AG04450 (cell line): ENCODE measurements at regions of chr22 and their contacts with region 1.

Region 1: GRCh38 chr22:41697126-41697775 is 2.1 kb upstream of the MEI1 start:
- DNase-seq: peak; percentile 72
- H3K4me3 ChIP-seq: 0 out of 2 replicates have a peak overlapping the region, but pooled peaks have one; percentile 10
- H3K27ac ChIP-seq: no peak overlapping the region
- H3K27me3 ChIP-seq: no peaks in the 10 kb centered on the region
- CTCF ChIP-seq: peak; percentile 98

Region 2: DNA sequence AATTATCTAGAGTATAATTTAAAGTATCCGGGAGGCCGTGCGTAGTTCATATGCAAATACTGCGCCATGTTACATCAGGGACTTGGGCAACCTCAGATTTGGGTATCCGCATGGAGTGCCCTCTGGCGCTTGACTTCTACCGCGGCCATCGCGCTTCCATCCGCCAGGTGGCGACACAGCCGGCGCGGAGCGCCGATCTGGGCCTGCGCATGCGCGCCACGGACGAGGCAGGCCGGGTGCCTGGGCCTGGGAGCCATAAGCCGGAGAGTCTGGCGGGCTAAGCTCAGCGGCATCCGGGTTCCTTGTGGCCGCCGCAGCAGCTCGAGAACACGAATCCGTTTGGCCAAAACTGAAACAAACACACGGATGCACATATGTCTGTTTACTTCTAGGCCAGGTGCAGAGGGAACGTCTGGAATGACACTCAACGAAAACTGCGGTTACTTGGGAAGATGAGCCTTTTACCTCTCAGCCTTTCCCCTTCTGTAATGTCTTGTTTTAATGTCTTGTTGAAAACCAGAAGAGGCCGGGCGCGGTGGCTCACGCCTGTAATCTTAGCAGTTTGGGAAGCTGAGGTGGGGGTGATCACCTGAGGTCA is 30.5 kb before region 1 on chr22:
- CTCF ChIA-PET with region 1: interaction called, 19 read pairs
- POLR2A ChIA-PET with region 1: interaction called, 5 read pairs
- DNase-seq: peak; percentile 59
- H3K4me3 ChIP-seq: peak overlapping the region; percentile 37; the same call in 1 of the 2 replicates
- H3K27ac ChIP-seq: peak overlapping the region; percentile 95
- H3K27me3 ChIP-seq: no peaks in the 10 kb centered on the region
- CTCF ChIP-seq: peak; percentile 98

Region 3: DNA sequence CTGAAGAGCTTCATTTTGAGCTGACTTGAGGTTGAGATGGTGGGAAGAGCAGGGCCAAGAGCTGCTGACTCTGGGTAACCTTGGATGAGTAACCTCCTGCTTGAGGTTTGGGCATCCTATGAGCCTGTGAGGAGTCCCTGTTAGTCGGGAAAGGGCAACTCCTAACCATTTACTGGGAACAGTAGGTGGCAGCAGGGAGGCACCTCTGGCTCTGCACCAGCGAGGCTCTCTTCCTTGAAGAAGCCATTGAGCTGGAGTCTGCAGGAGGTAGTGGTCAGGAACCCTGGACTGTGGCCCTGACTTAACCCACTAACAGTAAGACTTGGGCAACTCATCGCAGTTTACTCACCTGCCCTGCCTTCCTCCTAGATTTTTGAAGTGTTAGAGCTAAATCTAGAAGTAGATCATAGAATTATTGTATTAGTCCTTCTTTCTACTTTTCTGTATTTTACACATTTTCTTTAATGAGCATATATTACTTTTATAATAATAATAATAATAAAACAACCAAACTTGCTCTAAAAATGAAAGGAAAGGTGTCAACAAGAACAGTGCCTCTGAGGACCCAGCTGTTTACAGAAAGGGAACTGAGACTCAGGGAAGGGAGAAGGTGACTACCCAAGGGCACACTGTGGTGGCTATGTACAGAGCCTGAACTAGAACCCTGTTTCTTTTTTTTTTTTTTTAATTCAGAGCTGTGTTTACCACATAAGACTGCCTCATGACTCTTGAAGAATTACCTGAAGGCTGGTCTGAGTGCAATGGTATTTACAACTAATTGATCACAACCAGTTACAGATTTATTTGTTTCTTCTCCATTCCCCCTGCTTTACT is 49.5 kb after region 1 on chr22:
- CTCF ChIA-PET with region 1: interaction called, 34 read pairs
- POLR2A ChIA-PET with region 1: no interaction called
- DNase-seq: peak; percentile 44
- H3K4me3 ChIP-seq: no peak overlapping the region
- H3K27ac ChIP-seq: no peak overlapping the region
- H3K27me3 ChIP-seq: peaks cover 27% of the 10 kb centered on the region
- CTCF ChIP-seq: peak; percentile 88

Region 4: DNA sequence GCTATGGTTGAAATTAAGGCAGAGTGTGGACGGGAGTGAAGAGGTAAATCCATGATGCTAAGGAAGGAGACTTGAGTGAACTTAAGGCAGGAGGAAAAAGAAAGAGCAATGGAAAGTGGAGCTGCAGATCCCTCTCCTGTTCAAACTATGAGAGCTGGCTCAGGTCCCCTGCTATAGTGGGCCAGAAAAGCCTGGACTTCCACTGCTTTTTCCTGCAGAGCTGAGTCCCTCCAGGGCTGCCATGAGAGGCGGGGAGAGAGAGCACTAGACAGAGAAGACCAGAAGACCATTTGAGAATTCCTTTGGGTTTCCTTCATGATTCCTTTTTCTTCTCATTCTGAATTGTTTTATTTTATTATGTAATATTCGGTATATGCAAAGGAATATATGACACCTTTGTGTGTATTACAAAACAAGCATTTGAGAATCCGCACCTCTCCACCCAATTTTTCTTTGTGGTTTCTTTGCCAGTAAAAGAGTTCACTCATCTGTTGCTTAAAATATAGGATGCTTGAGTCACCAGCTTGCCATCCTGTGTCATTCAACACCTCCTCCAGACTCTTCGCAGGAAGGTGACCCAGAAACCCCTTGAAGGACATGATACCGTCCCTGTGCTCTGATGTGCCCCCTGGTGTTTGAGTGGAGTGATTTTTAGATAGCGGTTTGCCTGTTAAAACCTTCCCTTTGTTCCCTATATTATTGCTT is 160.1 kb after region 1 on chr22:
- CTCF ChIA-PET with region 1: interaction called, 41 read pairs
- POLR2A ChIA-PET with region 1: no interaction called
- DNase-seq: no peak
- H3K4me3 ChIP-seq: no peak overlapping the region
- H3K27ac ChIP-seq: no peak overlapping the region
- H3K27me3 ChIP-seq: no peaks in the 10 kb centered on the region
- CTCF ChIP-seq: peak; percentile 73

Region 5: DNA sequence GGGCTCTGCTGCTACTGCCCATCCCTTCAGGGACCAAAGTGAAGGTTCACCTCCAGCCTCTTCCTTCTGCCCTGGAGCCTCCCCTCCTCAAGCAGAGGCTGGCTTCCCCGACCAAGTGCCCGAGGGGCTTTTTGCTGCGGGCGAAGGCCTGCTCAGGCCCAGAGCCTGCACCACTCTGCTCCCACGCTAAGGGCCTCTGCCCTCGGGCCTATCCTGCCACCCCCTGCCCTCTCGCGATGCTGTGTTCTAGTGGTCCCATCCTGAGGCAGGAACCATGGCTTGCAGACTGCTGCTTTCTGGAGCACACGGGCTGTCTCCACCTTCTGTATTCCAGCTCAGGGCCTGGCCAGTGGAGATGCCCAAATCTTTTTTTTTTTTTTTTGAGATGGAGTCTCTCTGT is 238.3 kb after region 1 on chr22:
- CTCF ChIA-PET with region 1: interaction called, 281 read pairs
- POLR2A ChIA-PET with region 1: interaction called, 6 read pairs
- DNase-seq: no peak
- H3K4me3 ChIP-seq: no peak overlapping the region
- H3K27ac ChIP-seq: no peak overlapping the region
- H3K27me3 ChIP-seq: no peaks in the 10 kb centered on the region
- CTCF ChIP-seq: no peak

Region 6: GRCh38 chr22:41957941-41958556 is 260.8 kb after region 1 on chr22:
- CTCF ChIA-PET with region 1: interaction called, 11 read pairs
- POLR2A ChIA-PET with region 1: interaction called, 6 read pairs
- DNase-seq: no peak
- H3K4me3 ChIP-seq: no peak overlapping the region
- H3K27ac ChIP-seq: no peak overlapping the region
- H3K27me3 ChIP-seq: peaks cover 7% of the 10 kb centered on the region
- CTCF ChIP-seq: no peak

Region 7: GRCh38 chr22:41998361-41999275 is 301.4 kb after region 1 on chr22 and contains the start of gene WBP2NL:
- CTCF ChIA-PET with region 1: no interaction called
- POLR2A ChIA-PET with region 1: no interaction called
- DNase-seq: peak; percentile 8
- H3K4me3 ChIP-seq: peak within 1 kb of the TSS; percentile 55
- H3K27ac ChIP-seq: no peak within 1 kb of the TSS
- H3K27me3 ChIP-seq: peaks cover 16% of the 10 kb centered on the region
- CTCF ChIP-seq: no peak
- polyA plus RNA-seq, gene WBP2NL: 0.11 and 0.21 TPM in 2 replicates